ENCODE measurements at regions of chr19 and their contacts with region 1.

Region 1: GRCh38 chr19:35775298-35776110 is at the start of gene ARHGAP33:
- DNase-seq: peak; percentile 94 to 99 (median 98)
- ATAC-seq: peak; percentile 99
- H3K4me3 ChIP-seq: peak within 1 kb of the TSS; percentile 54 to 60
- H3K4me3 Mint-ChIP-seq: peak within 1 kb of the TSS; percentile 84
- H3K27ac ChIP-seq: no peak within 1 kb of the TSS
- H3K27ac Mint-ChIP-seq: no peak within 1 kb of the TSS
- H3K4me1 ChIP-seq: peaks cover 12% of the 10 kb centered on the region
- H3K4me1 Mint-ChIP-seq: peaks cover 21% of the 10 kb centered on the region
- H3K27me3 ChIP-seq: no peaks in the 10 kb centered on the region
- H3K27me3 Mint-ChIP-seq: no peaks in the 10 kb centered on the region
- CTCF ChIP-seq: no peak
- total RNA-seq, gene ARHGAP33: 8.7 to 10.6 TPM

Region 2: GRCh38 chr19:35740423-35741202 is 34.9 kb before region 1 on chr19:
- CTCF ChIA-PET with region 1: no interaction called
- POLR2A ChIA-PET with region 1: no interaction called
- intact Hi-C with region 1: loop called (anchors 1 kb)
- DNase-seq: peak; percentile 87 to 97 (median 95)
- ATAC-seq: peak; percentile 65
- H3K4me3 ChIP-seq: peak overlapping the region; percentile 60 to 63
- H3K4me3 Mint-ChIP-seq: peak overlapping the region; percentile 87
- H3K27ac ChIP-seq: peak overlapping the region; percentile 50 to 58
- H3K27ac Mint-ChIP-seq: peak overlapping the region; percentile 83
- H3K4me1 ChIP-seq: peaks cover 51% of the 10 kb centered on the region
- H3K4me1 Mint-ChIP-seq: peaks cover 53% of the 10 kb centered on the region
- H3K27me3 ChIP-seq: no peaks in the 10 kb centered on the region
- H3K27me3 Mint-ChIP-seq: no peaks in the 10 kb centered on the region
- CTCF ChIP-seq: no peak

Region 3: DNA sequence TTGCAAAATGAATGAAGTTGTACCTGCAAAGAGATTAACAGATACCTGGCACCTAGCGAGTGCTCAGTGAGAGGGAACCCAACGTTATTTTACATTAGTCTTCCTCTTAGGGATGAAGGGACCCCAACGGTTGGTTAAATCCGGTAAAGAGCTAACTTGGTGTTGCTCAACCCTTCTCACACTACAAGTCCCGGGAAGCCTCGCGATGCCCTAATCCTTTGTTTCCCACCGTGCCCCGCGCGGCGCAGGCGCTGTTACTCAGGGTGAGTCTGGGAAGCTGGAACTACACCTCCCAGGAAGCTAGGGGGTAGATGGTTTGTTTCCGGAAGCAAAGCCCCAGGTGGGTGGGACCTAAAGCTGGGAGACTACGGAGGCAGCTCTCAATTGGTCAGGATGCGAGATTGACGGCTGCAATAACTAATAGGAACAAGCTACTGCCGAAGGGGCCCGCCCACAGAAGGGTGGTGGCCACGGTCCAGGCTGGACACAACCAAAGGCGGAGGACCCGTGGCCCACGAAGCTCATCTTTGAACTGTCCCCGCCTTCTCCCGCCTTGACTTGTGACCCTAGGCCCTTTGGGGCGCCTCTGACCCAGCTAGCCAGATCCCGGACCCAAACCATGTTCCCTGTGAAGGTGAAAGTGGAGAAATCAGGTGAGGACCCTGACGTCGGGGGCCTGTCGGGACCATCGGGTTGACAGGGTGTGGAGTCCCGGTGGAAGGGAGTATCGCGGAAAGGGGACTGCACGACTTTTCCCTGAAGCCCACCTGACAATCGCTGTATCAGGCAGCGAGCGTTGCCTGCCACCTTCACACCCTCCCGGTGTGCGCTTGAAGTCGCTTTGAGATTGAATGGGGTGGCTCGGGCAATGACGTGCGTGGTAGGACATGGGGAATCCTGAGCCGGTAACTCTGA is 27.1 kb before region 1 on chr19 and contains the start of gene LIN37:
- CTCF ChIA-PET with region 1: no interaction called
- POLR2A ChIA-PET with region 1: interaction called, 4 read pairs
- intact Hi-C with region 1: loop called in 1 of 2 experiments (anchors 1 kb)
- DNase-seq: peak; percentile 97 to 100 (median 98)
- ATAC-seq: peak; percentile 72
- H3K4me3 ChIP-seq: peak within 1 kb of the TSS; percentile 84 to 99
- H3K4me3 Mint-ChIP-seq: peak within 1 kb of the TSS; percentile 98
- H3K27ac ChIP-seq: peak within 1 kb of the TSS; percentile 71 to 84
- H3K27ac Mint-ChIP-seq: peak within 1 kb of the TSS; percentile 95
- H3K4me1 ChIP-seq: peaks cover 41% of the 10 kb centered on the region
- H3K4me1 Mint-ChIP-seq: peaks cover 44% of the 10 kb centered on the region
- H3K27me3 ChIP-seq: no peaks in the 10 kb centered on the region
- H3K27me3 Mint-ChIP-seq: no peaks in the 10 kb centered on the region
- CTCF ChIP-seq: no peak
- total RNA-seq, gene LIN37: 5.5 to 9.3 TPM

Region 4: DNA sequence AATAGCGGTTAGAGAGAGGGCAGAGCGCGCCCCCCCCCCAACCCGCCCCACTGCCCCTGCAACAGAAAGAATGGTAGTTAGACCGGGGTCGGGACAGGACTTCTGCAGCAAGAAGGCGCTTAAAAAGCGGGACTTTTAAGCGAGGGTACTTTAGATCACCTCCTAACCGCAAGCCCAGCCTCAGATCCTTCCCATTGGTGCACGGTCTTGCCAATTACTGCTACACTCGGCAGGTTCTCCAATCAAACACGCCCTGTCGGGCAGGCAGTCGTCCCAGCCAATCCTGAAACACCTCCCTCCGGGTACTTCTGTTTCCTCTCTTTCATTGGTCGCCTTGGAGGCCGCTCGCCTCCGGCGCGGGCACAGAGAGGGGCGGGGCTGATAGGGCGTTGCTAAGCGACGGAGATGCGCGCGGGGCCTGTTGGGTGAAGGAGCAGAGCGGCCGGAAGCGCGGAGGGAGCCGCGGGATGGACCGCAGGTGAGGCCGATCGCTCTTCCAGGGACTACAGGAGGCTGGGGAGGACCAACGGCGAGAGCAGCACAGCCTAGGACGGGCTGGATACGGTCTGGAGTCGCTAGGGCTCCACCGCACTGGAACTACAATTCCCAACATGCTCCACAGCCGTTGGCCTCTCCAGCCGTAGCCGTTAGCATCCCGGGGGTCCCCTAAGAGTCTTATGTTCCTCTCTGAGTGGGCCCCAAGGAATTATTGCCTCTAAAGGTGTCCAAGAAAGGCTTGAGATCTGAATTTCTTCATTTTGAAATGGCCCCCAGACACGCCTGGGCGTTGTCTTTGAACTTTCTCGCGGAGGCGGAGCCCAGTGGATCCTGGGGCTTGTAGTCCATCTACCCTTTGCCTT is 17.5 kb before region 1 on chr19 and contains the start of gene PROSER3:
- CTCF ChIA-PET with region 1: no interaction called
- POLR2A ChIA-PET with region 1: no interaction called
- intact Hi-C with region 1: loop called (anchors 1 kb)
- DNase-seq: peak; percentile 96 to 99 (median 98)
- ATAC-seq: peak; percentile 95
- H3K4me3 ChIP-seq: peak within 1 kb of the TSS; percentile 98 to 100
- H3K4me3 Mint-ChIP-seq: peak within 1 kb of the TSS; percentile 96
- H3K27ac ChIP-seq: peak within 1 kb of the TSS; percentile 95 to 97
- H3K27ac Mint-ChIP-seq: peak within 1 kb of the TSS; percentile 97
- H3K4me1 ChIP-seq: peaks cover 25% of the 10 kb centered on the region
- H3K4me1 Mint-ChIP-seq: peaks cover 34% of the 10 kb centered on the region
- H3K27me3 ChIP-seq: no peaks in the 10 kb centered on the region
- H3K27me3 Mint-ChIP-seq: peaks cover 9% of the 10 kb centered on the region
- CTCF ChIP-seq: no peak
- total RNA-seq, gene PROSER3: 17.3 to 19.5 TPM

Region 5: DNA sequence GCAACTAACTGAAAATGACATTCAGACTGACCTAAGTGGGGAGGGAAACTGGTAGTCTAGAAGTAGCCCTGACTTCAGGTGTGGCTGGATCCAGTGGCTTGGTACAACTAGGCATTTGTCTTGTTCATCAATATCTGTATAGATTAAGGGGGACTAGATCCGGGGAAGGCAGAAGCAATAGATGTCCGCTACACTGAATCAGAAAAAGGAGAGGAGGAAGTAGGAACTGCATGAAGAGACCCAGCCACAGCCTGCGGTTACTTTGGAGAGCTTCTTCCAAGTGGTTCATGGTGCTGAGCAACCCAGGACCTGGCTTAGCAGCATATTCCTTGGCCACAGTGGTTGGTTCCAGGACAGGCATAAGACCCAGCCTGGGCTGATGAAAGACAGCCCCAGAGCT is 47.1 kb after region 1 on chr19:
- CTCF ChIA-PET with region 1: no interaction called
- POLR2A ChIA-PET with region 1: no interaction called
- intact Hi-C with region 1: no loop called
- DNase-seq: no peak
- ATAC-seq: no peak
- H3K4me3 ChIP-seq: no peak overlapping the region
- H3K4me3 Mint-ChIP-seq: no peak overlapping the region
- H3K27ac ChIP-seq: no peak overlapping the region
- H3K27ac Mint-ChIP-seq: no peak overlapping the region
- H3K4me1 ChIP-seq: no peaks in the 10 kb centered on the region
- H3K4me1 Mint-ChIP-seq: no peaks in the 10 kb centered on the region
- H3K27me3 ChIP-seq: peaks cover 0 to 6% of the 10 kb centered on the region in 2 experiments
- H3K27me3 Mint-ChIP-seq: peaks cover 27% of the 10 kb centered on the region
- CTCF ChIP-seq: no peak

Region 6: DNA sequence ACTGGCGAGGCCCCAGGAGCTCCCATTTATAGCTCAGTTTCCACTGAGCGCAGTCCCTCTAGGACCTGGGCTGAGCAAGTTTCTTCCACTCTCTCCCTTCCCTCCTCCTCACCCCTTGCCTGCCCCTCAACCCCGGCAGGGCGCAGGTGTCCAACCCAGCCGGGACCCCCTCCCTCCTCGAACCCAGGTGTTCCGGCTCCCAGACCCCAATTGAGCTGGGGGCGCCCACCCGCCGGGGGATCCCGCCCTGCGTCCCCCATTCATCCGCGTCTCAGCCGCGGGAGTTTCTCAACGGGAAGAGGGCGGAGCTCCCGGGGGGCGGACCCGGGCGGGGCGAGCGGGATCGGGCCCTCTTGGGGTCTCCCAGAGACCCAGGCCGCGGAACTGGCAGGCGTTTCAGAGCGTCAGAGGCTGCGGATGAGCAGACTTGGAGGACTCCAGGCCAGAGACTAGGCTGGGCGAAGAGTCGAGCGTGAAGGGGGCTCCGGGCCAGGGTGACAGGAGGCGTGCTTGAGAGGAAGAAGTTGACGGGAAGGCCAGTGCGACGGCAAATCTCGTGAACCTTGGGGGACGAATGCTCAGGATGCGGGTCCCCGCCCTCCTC is 81.1 kb after region 1 on chr19 and contains the start of gene KIRREL2:
- CTCF ChIA-PET with region 1: no interaction called
- POLR2A ChIA-PET with region 1: no interaction called
- intact Hi-C with region 1: no loop called
- DNase-seq: peak in 6 of 9 experiments; percentile 10 to 57 (median 27)
- ATAC-seq: peak; percentile 62
- H3K4me3 ChIP-seq: peak within 1 kb of the TSS; percentile 60 to 71
- H3K4me3 Mint-ChIP-seq: peak within 1 kb of the TSS; percentile 84
- H3K27ac ChIP-seq: no peak within 1 kb of the TSS
- H3K27ac Mint-ChIP-seq: no peak within 1 kb of the TSS
- H3K4me1 ChIP-seq: peaks cover 12% of the 10 kb centered on the region
- H3K4me1 Mint-ChIP-seq: peaks cover 20% of the 10 kb centered on the region
- H3K27me3 ChIP-seq: peaks cover 15 to 21% of the 10 kb centered on the region in 2 experiments
- H3K27me3 Mint-ChIP-seq: peaks cover 52% of the 10 kb centered on the region
- CTCF ChIP-seq: no peak
- total RNA-seq, gene KIRREL2: 0.49 to 0.69 TPM

Measured in CD8-positive, alpha-beta T cell (primary cell).